Ascending aorta (tissue), 2 donors: ENCODE measurements at regions of chr12 and their contacts with region 1.

Region 1: GRCh38 chr12:56468216-56469006 is at the start of gene SPRYD4:
- DNase-seq: peak; percentile 81 to 96
- H3K4me3 ChIP-seq: peak within 1 kb of the TSS; percentile 58 to 85
- H3K27ac ChIP-seq: peak within 1 kb of the TSS; percentile 78 to 90
- H3K4me1 ChIP-seq: peaks cover 0 to 16% of the 10 kb centered on the region in 2 donors
- H3K27me3 ChIP-seq: no peaks in the 10 kb centered on the region
- CTCF ChIP-seq: peak in 2 of 3 experiments; percentile 38 to 47
- total RNA-seq, gene SPRYD4: 0.43 TPM

Region 2: GRCh38 chr12:56448860-56449621 is 19.4 kb before region 1 on chr12 and contains the start of gene TIMELESS:
- intact Hi-C with region 1: loop called (anchors 2 kb)
- DNase-seq: peak; percentile 43 to 92
- H3K4me3 ChIP-seq: peak within 1 kb of the TSS; percentile 74 to 87
- H3K27ac ChIP-seq: peak within 1 kb of the TSS; percentile 79 to 86
- H3K4me1 ChIP-seq: no peaks in the 10 kb centered on the region
- H3K27me3 ChIP-seq: no peaks in the 10 kb centered on the region
- CTCF ChIP-seq: peak in 1 of 3 experiments; percentile 6
- total RNA-seq, gene TIMELESS: 2.0 TPM